A549 (cell line): ENCODE measurements at regions of chr9 and their contacts with region 1.

Region 1: DNA sequence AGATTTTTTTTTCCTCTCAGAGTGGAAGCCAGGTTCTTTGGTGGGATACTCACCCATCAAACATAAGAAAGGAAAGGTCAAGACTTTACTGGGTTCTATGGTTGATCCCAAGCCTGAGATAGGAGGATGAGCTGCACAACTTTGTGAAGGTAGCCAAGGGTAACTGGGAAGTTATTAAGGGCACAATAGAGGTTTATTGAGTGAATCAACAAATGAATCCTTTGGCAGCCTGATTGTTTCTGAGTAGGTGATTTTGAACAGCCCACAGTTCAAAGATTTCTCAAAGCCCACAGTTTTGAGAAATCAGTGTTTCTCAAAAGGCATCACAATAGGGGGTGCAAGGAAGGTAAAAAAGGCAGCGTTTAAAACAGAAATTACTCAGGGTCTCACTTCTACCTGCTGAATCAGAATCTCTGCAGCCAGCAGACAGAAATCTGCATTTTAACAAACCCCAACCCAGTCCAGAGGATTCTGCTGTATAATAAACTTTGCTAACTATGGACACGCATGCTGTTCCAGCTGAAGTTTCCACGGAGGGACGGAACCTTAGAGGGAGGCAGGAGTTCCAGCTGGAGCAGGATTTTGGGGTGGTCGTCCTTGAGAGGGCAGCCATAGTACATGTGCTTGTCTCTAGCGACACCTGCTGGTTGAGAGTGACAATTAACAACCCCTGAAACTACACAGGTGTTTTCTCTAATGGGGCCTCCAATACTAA is 32.7 kb upstream of the FSD1L start:
- DNase-seq: peak; percentile 53 to 59
- ATAC-seq: peak; percentile 81 to 88; a peak in 5 of 6 replicates
- H3K4me3 ChIP-seq: no peak overlapping the region
- H3K27ac ChIP-seq: peak overlapping the region; percentile 26 to 65; a peak in 3 of 6 replicates
- H3K4me1 ChIP-seq: peaks cover 10% of the 10 kb centered on the region; the same call in 1 of the 3 replicates
- CTCF ChIP-seq: peak; percentile 95
- EP300 ChIP-seq: no peak
- POLR2A ChIP-seq: no peak
- RAD21 ChIP-seq: peak; percentile 97 to 99

Region 2: GRCh38 chr9:104856413-104856941 is 558.6 kb before region 1 on chr9:
- CTCF ChIA-PET with region 1: interaction called, 10 read pairs
- POLR2A ChIA-PET with region 1: no interaction called
- DNase-seq: no peak
- ATAC-seq: no peak
- H3K4me3 ChIP-seq: no peak overlapping the region
- H3K27ac ChIP-seq: no peak overlapping the region
- H3K4me1 ChIP-seq: peaks cover 11% of the 10 kb centered on the region; the same call in 1 of the 3 replicates
- CTCF ChIP-seq: no peak
- EP300 ChIP-seq: no peak
- POLR2A ChIP-seq: no peak
- RAD21 ChIP-seq: no peak

Region 3: GRCh38 chr9:104927912-104928740 is 487.0 kb before region 1 on chr9 and contains the start of gene ABCA1:
- CTCF ChIA-PET with region 1: interaction called, 59 read pairs
- POLR2A ChIA-PET with region 1: no interaction called
- DNase-seq: peak; percentile 79
- ATAC-seq: peak; percentile 62 to 67
- H3K4me3 ChIP-seq: peak within 1 kb of the TSS; percentile 73
- H3K27ac ChIP-seq: peak within 1 kb of the TSS; percentile 76 to 91
- H3K4me1 ChIP-seq: peaks cover 6% of the 10 kb centered on the region; the same call in 2 of the 3 replicates
- CTCF ChIP-seq: no peak
- EP300 ChIP-seq: no peak
- POLR2A ChIP-seq: 0 out of 2 replicates have a peak, but pooled peaks have one; percentile 13
- RAD21 ChIP-seq: 0 out of 5 replicates have a peak, but pooled peaks of 1 of the 2 experiments have one; percentile 23
- polyA plus RNA-seq, gene ABCA1: 12.0 and 15.5 TPM in 2 replicates

Region 4: GRCh38 chr9:105191508-105192121 is 223.5 kb before region 1 on chr9:
- CTCF ChIA-PET with region 1: interaction called, 10 read pairs
- POLR2A ChIA-PET with region 1: no interaction called
- DNase-seq: peak; percentile 64 to 89
- ATAC-seq: peak; percentile 74 to 85
- H3K4me3 ChIP-seq: no peak overlapping the region
- H3K27ac ChIP-seq: peak overlapping the region; percentile 82 to 90
- H3K4me1 ChIP-seq: peaks cover 44% of the 10 kb centered on the region
- CTCF ChIP-seq: no peak
- EP300 ChIP-seq: peak; percentile 89 to 90; a peak in 4 of 5 replicates
- POLR2A ChIP-seq: no peak
- RAD21 ChIP-seq: peak; percentile 24 to 58; a peak in 3 of 5 replicates

Region 5: DNA sequence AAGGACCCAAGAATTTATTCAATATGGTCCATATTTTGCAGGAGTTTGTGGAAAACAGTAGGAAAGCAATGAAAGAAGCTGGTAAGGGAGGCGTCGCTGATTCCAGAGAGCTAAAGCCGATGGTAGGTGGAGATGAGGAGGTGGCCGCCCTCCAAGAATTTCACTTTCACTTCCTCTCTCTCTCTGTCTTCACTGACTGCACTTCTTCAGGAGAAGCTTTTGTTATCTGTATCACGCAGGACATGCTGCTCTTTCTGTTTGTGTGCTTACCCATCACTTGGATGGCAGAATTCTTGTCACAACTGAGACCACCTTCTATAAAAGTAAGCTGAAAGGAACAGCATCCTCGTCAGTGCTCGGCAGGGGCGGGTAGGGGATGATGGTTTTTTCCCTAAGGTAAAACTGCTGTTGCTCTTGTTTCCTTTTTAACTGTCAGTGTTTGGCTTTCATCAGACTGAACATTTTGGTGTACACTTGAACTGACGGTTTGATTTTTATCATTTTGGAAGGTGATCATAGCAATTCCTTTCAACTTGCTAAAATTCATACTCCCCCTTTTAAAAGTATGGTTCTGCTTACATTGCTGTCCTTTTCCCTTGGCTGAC is 29.6 kb before region 1 on chr9:
- CTCF ChIA-PET with region 1: interaction called, 14 read pairs
- POLR2A ChIA-PET with region 1: no interaction called
- DNase-seq: no peak
- ATAC-seq: no peak
- H3K4me3 ChIP-seq: no peak overlapping the region
- H3K27ac ChIP-seq: no peak overlapping the region
- H3K4me1 ChIP-seq: no peaks in the 10 kb centered on the region
- CTCF ChIP-seq: no peak
- EP300 ChIP-seq: no peak
- POLR2A ChIP-seq: no peak
- RAD21 ChIP-seq: no peak

Region 6: DNA sequence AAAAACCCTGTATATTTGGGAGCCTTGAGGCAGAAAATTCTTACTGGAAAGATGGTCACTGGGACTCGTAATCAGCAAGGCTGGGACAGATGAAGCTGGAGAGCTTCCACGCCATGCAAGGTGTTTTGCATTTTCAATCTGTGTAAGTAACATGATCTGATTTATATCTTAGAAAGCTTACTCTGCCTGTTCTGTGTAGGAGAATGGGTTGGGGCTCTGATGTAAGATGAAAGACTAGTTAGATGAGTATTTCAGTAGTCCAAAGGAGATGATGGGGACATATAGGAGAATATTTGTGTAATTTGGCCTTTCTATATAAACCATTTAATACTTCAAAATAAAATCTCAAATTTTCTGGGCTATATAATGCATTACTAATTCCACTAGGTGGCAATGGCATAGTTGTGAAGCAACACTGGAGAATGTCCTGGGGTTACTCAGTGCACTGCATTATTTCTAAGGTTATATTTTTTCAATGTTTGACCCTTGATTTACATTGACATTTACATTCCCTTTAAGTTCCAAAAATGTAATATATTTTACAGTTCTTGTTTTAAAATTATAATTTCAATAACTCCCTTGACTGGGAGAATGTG is 10.8 kb after region 1 on chr9:
- CTCF ChIA-PET with region 1: interaction called, 15 read pairs
- POLR2A ChIA-PET with region 1: no interaction called
- DNase-seq: peak; percentile 21 to 55
- ATAC-seq: peak; percentile 85 to 93
- H3K4me3 ChIP-seq: no peak overlapping the region
- H3K27ac ChIP-seq: no peak overlapping the region
- H3K4me1 ChIP-seq: no peaks in the 10 kb centered on the region
- CTCF ChIP-seq: peak; percentile 66
- EP300 ChIP-seq: no peak
- POLR2A ChIP-seq: no peak
- RAD21 ChIP-seq: peak; percentile 71 to 77

Region 7: DNA sequence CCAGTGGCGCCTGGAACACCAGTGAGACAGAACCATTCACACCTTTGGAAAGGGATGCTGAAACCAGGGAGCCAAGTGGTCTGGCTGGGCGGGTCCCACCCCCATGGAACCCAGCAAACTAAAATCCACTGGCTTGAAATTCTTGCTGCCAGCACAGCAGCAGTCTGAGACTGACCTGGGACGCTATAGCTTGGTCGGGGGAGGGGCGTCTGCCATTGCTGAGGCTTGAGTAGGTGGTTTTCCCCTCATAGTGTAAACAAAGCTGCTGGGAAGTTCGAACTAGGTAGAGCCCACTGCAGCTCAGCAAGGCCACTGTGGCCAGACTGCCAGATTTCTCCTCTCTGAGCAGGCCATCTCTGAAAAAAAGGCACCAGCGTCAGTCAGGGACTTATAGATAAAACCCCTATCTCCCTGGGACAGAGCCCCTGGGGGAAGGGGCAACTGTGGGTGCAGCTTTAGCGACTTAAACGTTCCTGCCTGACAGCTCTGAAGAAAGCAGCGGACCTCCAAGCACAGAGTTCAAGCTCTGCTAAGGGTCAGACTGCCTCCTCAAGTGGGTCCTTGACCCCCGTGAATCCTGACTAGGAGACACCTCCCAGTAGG is 100.8 kb after region 1 on chr9:
- CTCF ChIA-PET with region 1: no interaction called
- POLR2A ChIA-PET with region 1: no interaction called
- DNase-seq: no peak
- ATAC-seq: no peak
- H3K4me3 ChIP-seq: no peak overlapping the region
- H3K27ac ChIP-seq: no peak overlapping the region
- H3K4me1 ChIP-seq: no peaks in the 10 kb centered on the region
- CTCF ChIP-seq: no peak
- EP300 ChIP-seq: no peak
- POLR2A ChIP-seq: no peak
- RAD21 ChIP-seq: no peak

Region 8: GRCh38 chr9:105637787-105638395 is 222.8 kb after region 1 on chr9:
- CTCF ChIA-PET with region 1: no interaction called
- POLR2A ChIA-PET with region 1: no interaction called
- DNase-seq: no peak
- ATAC-seq: peak in 1 of 2 experiments; percentile 49; a peak in 1 of 6 replicates
- H3K4me3 ChIP-seq: no peak overlapping the region
- H3K27ac ChIP-seq: no peak overlapping the region
- H3K4me1 ChIP-seq: no peaks in the 10 kb centered on the region
- CTCF ChIP-seq: peak; percentile 31; the same call in 2 of the 3 replicates
- EP300 ChIP-seq: no peak
- POLR2A ChIP-seq: no peak
- RAD21 ChIP-seq: 0 out of 5 replicates have a peak, but pooled peaks of 1 of the 2 experiments have one; percentile 8

Region 9: DNA sequence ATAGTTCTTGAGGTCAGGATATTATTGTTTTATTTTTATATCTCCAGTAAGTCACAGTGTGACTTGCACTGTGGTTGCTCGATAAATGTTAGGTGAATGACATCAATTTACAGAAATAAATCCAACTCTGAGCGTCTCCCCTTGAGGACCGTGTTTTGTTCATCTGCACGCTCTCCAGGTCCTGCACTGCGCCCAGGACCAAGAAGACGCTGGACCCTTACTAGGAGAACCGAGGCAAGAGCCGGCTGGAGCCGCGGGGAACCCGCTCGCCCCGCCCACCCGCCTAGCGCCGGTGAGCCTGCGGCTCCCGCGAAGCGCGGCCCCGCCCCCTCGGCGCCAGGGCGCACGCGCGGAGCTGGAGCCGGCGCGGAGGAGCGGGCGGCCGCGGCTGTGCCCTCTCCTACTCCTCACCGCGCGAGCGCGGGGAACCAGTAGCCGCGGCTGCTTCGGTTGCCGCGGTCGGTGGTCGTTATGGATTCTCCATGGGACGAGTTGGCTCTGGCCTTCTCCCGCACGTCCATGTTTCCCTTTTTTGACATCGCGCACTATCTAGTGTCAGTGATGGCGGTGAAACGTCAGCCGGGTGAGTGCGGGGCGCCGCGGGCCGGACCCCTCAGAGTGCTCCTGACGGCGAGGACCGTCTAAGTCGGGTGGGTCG is 279.2 kb after region 1 on chr9 and contains the start of gene TMEM38B:
- CTCF ChIA-PET with region 1: no interaction called
- POLR2A ChIA-PET with region 1: no interaction called
- DNase-seq: peak; percentile 59 to 80
- ATAC-seq: peak; percentile 89 to 95
- H3K4me3 ChIP-seq: peak within 1 kb of the TSS; percentile 70
- H3K27ac ChIP-seq: peak within 1 kb of the TSS; percentile 57 to 85
- H3K4me1 ChIP-seq: peaks cover 13% of the 10 kb centered on the region
- CTCF ChIP-seq: no peak
- EP300 ChIP-seq: no peak
- POLR2A ChIP-seq: peak; percentile 63
- RAD21 ChIP-seq: no peak
- polyA plus RNA-seq, gene TMEM38B: 22.2 and 23.3 TPM in 2 replicates